Heart left ventricle (tissue), 16 donors: ENCODE measurements at regions of chr22 and their contacts with region 1.

Region 1: DNA sequence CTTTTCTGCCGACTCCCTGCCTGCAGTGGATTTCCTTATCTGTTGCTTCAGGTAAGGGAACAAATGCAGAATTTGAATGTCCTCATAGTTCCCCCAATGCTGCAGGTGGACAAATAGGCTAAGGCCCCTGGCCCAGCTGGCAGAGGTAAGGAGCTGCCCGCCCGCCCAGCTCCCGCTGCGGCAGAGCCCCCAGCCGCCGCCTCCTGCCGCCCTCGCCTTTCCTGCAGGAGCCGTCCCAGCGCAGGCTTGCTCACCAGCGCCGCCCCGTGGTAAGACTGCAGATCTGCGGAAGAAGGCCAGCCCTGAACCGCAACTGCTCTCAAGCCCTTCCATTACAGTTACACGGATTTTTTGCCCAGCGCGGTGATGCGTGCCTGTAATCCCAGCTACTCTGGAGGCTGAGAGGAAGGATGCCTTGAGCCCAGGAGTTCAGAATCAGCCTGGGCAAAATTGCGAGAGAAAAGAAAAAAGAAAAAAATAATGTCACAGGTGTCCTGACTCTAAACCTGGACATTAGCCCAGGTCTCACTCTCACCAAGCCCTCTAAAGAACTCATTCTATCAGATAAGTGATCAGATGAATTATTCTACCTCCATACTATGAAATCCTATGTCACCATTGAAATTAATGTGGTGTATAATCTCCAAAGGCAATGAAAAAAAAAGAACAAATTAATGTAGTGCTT is 51.2 kb upstream of the EMID1 start:
- DNase-seq: peak; percentile 76 to 92 (median 76)
- ATAC-seq: peak; percentile 30 to 81 (median 79)
- H3K4me3 ChIP-seq: peak overlapping the region in 9 of 12 donors; percentile 6 to 46 (median 24)
- H3K27ac ChIP-seq: peak overlapping the region in 1 of 12 donors; percentile 9
- H3K4me1 ChIP-seq: peaks cover 0 to 49% (median 15%) of the 10 kb centered on the region in 12 donors
- H3K27me3 ChIP-seq: no peaks in the 10 kb centered on the region
- CTCF ChIP-seq: peak; percentile 84 to 98 (median 94)
- POLR2A ChIP-seq: no peak

Region 2: GRCh38 chr22:28855355-28856094 is 299.0 kb before region 1 on chr22:
- intact Hi-C with region 1: loop called in 3 of 10 experiments (anchors 1 to 10 kb)
- DNase-seq: peak in 2 of 5 donors; percentile 30 to 40
- ATAC-seq: peak; percentile 37 to 75 (median 62)
- H3K4me3 ChIP-seq: no peak overlapping the region
- H3K27ac ChIP-seq: no peak overlapping the region
- H3K4me1 ChIP-seq: peaks cover 0 to 6% (median 0%) of the 10 kb centered on the region in 12 donors
- H3K27me3 ChIP-seq: no peaks in the 10 kb centered on the region
- CTCF ChIP-seq: peak; percentile 83 to 97 (median 90)
- POLR2A ChIP-seq: no peak

Region 3: DNA sequence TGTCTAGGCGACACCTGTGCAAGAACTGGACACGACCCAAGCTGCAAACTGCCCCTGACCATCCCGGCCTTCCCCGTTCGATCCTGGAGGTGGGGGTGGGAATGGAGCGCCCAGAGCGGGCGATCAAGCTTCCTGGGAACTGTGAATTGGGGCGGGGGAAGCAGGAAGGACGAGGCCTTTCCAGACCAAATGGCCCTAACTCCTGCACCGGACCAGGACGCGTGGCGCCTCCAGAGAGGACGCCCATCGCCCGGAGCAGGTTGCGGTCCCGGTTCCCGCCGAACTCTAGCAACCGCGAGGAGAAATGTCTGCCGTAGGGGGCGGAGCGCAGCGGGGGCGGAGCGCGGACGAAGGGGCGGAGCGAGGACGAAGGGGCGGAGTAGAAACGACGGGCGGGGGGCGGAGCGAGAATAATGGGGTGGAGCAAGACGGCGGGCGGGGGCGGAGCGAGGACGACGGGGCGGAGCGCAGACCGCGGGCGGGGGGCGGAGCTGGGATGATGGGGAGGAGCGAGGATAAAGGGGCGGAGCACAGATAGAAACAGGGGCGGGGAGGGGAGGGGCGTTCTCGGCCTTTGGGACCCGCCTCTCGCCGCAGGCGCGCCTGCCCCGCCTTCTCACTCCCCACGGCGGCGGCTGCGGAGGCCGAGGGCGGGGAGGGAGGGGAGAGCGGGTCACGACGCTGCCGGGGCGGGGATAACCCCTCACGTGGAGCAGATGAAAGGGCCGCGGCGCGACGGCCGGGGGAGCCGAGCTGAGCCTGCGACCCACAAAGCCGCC is 271.4 kb before region 1 on chr22 and contains the start of gene ZNRF3:
- intact Hi-C with region 1: loop called in 1 of 10 experiments (anchors 10 kb)
- DNase-seq: peak; percentile 92 to 97 (median 94)
- ATAC-seq: peak; percentile 96 to 98 (median 97)
- H3K4me3 ChIP-seq: peak within 1 kb of the TSS; percentile 32 to 88 (median 66)
- H3K27ac ChIP-seq: peak within 1 kb of the TSS in 10 of 12 donors; percentile 32 to 74 (median 68)
- H3K4me1 ChIP-seq: peaks cover 5 to 23% (median 17%) of the 10 kb centered on the region in 12 donors
- H3K27me3 ChIP-seq: peaks cover 0 to 9% (median 0%) of the 10 kb centered on the region in 9 donors
- CTCF ChIP-seq: no peak
- POLR2A ChIP-seq: peak in 1 of 2 donors; percentile 7
- total RNA-seq, gene ZNRF3: 5.3 to 9.2 (median 7.3) TPM

Region 4: GRCh38 chr22:29040385-29041275 is 113.9 kb before region 1 on chr22:
- intact Hi-C with region 1: loop called in 1 of 10 experiments (anchors 10 kb)
- DNase-seq: peak in 4 of 5 donors; percentile 39 to 61 (median 52)
- ATAC-seq: peak in 3 of 4 donors; percentile 69 to 84 (median 76)
- H3K4me3 ChIP-seq: no peak overlapping the region
- H3K27ac ChIP-seq: no peak overlapping the region
- H3K4me1 ChIP-seq: peaks cover 0 to 10% (median 0%) of the 10 kb centered on the region in 12 donors
- H3K27me3 ChIP-seq: no peaks in the 10 kb centered on the region
- CTCF ChIP-seq: peak; percentile 93 to 99 (median 96)
- POLR2A ChIP-seq: no peak

Region 5: DNA sequence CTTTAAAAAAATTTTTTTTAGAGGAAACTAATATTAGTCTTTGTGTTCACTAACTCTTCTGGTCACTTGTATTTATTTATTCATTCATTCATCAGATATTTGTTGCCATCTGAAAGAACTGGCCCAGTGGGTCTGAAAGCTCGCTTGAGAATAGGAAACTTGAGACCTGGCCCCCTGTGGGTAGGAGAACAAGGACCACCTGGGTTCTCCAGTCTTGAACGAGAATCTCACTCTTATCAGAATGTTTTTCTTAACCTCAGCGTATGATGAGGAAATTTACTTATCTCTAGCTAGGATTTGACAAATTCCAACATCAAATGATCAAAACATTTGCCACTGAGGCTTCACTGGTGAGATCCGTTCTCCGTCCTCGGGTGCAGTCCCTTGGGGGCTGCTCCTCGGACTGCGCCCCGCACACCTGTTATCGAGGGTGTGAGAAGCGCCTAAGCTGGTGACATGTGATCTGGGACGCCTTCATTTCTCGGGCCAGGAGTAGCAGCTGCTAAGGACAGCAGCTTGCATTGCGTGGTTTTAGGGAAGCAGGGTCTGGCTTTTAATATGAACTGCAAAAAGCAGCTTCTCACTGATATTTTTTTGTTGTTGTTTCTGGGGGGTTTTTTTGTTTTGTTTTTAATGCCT is 99.2 kb before region 1 on chr22:
- intact Hi-C with region 1: loop called in 1 of 10 experiments (anchors 10 kb)
- DNase-seq: no peak
- ATAC-seq: no peak
- H3K4me3 ChIP-seq: no peak overlapping the region
- H3K27ac ChIP-seq: no peak overlapping the region
- H3K4me1 ChIP-seq: no peaks in the 10 kb centered on the region
- H3K27me3 ChIP-seq: peaks cover 0 to 7% (median 0%) of the 10 kb centered on the region in 9 donors
- CTCF ChIP-seq: no peak
- POLR2A ChIP-seq: no peak

Region 6: GRCh38 chr22:29072193-29072978 is 82.1 kb before region 1 on chr22:
- intact Hi-C with region 1: loop called in 4 of 10 experiments (anchors 5 to 10 kb)
- DNase-seq: peak; percentile 86 to 93 (median 87)
- ATAC-seq: peak; percentile 72 to 95 (median 92)
- H3K4me3 ChIP-seq: peak overlapping the region in 11 of 12 donors; percentile 24 to 98 (median 75)
- H3K27ac ChIP-seq: peak overlapping the region in 1 of 12 donors; percentile 41
- H3K4me1 ChIP-seq: peaks cover 0 to 54% (median 19%) of the 10 kb centered on the region in 12 donors
- H3K27me3 ChIP-seq: peaks cover 0 to 46% (median 0%) of the 10 kb centered on the region in 9 donors
- CTCF ChIP-seq: no peak
- POLR2A ChIP-seq: no peak

Region 7: DNA sequence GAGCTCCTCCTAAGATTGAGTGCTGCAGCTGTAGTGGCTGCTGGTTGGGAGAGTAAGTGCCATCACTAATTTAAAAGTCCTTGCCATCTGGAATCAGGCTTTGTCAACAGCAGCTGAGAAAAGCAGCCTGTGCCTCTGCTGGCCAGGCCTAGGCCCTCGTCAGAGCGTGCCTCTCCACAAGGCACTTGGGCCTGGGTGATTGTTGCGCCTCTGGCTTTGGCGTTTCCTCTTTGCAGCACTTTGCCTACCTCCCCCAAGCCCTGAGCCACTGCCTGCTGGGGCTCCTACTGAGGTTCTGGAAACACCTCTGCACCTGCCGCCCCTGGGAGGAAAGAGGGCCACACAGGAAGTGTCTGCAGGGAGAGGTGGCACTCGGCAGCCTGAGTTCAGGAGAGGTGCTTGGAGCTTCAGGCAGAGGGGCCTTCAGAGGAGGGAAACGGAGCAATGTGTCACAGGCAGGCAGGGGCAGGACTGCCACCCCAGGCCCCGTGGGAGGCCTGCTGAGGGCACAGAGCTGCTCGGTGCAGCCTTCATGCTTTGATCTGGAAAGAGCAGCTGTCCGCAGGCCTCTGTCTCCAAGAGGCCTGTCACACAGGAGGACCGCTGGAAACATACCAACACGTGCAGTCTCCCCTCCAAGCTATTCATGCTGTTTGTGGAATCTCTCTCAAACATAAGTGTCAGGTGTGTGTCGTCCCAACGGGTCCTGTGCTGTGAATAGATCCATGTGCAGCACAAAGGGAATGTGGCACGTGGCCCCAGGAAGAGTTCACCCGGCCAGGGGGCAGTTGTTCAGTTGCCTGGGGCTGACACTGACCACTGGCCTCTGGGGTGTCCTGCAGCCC is 10.3 kb before region 1 on chr22:
- intact Hi-C with region 1: no loop called
- DNase-seq: no peak
- ATAC-seq: no peak
- H3K4me3 ChIP-seq: no peak overlapping the region
- H3K27ac ChIP-seq: no peak overlapping the region
- H3K4me1 ChIP-seq: peaks cover 0 to 15% (median 2%) of the 10 kb centered on the region in 12 donors
- H3K27me3 ChIP-seq: no peaks in the 10 kb centered on the region
- CTCF ChIP-seq: no peak
- POLR2A ChIP-seq: no peak

Region 8: DNA sequence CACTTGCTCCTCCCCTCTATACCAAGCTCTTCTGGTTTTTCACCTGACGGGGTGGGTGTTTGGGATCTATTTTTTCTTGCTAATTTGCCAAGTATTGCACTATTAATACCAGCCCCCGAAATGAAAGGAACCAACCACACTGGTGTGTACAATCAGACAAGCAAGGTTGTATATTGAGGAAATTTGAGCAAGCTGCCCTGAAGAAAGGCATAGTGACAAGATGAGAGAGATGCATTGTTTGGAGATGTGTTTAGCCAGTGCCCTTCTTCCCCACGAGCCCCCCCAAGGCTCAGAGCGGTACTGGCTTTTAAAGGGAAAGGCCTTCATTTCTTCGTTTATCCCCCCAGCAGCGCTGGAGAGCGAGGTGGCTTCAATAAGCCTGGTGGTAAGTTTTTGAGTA is 136.7 kb after region 1 on chr22:
- intact Hi-C with region 1: no loop called
- DNase-seq: no peak
- ATAC-seq: no peak
- H3K4me3 ChIP-seq: no peak overlapping the region
- H3K27ac ChIP-seq: no peak overlapping the region
- H3K4me1 ChIP-seq: peaks cover 0 to 6% (median 0%) of the 10 kb centered on the region in 12 donors
- H3K27me3 ChIP-seq: no peaks in the 10 kb centered on the region
- CTCF ChIP-seq: no peak
- POLR2A ChIP-seq: no peak